Activated CD4-positive, alpha-beta T cell treated with anti-CD3 and anti-CD28 coated beads for 36 hours (primary cell): ENCODE measurements at regions of chr2 and their contacts with region 1.

Region 1: GRCh38 chr2:37231241-37232130 is at the starts of genes CEBPZ and NDUFAF7:
- DNase-seq: peak; percentile 95
- ATAC-seq: peak; percentile 96
- H3K4me3 Mint-ChIP-seq: no peak within 1 kb of the TSS
- H3K27ac Mint-ChIP-seq: no peak within 1 kb of the TSS
- H3K4me1 Mint-ChIP-seq: peaks cover 39% of the 10 kb centered on the region
- H3K27me3 Mint-ChIP-seq: no peaks in the 10 kb centered on the region
- total RNA-seq, gene CEBPZ: 81.8 to 107 TPM
- total RNA-seq, gene NDUFAF7: 20.8 to 22.9 TPM

Region 2: DNA sequence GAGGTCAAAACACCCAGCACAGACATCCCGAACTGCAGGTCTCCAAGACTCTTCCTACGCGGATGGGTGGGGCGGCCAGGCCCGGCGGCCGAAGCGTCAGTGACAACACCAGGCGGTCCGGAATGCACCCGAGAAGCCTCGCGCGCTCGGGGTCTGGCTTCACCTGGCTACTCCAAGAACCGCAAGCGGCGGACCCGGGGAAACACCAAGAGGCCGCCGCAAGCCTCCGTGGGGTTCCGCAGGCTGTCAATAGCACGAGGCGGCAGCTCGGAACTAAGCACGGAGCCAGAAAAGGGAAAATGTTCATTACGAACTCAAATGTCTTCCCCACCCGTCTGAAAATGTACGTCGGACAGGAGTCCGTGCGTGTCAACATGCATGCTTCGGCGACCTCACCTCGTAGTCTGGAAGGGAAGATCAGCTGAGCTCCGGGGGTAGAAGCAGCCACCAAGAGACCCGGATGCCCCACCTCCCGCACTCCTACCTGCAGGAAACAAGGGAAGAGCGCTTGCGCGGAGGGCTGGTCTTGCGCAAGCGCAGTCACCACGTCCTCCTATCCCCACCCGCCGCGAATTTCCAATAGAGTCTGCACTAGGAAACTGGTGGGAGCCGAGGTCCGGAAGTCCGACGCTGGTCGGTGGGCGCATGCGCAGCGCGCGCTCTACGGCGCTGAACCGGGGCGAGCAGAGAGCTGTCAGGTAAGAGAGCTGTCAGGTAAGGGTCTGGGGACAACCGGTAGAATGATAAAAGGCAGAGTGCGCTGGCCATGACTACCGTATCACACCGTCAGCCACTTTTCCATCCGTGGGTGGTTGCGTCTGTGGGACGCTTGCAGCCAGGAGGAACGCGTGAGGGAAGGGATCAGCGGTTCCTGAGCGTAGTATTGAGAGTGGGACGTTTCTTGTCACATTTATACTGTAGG is 147.4 kb before region 1 on chr2 and contains the starts of genes GPATCH11 and HEATR5B:
- CTCF ChIA-PET with region 1: no interaction called
- POLR2A ChIA-PET with region 1: interaction called, 4 read pairs
- intact Hi-C with region 1: loop called (anchors 1 kb)
- DNase-seq: peak; percentile 94
- ATAC-seq: peak; percentile 89
- H3K4me3 Mint-ChIP-seq: no peak within 1 kb of the TSS
- H3K27ac Mint-ChIP-seq: no peak within 1 kb of the TSS
- H3K4me1 Mint-ChIP-seq: peaks cover 44% of the 10 kb centered on the region
- H3K27me3 Mint-ChIP-seq: no peaks in the 10 kb centered on the region
- total RNA-seq, gene GPATCH11: 9.6 to 10.0 TPM
- total RNA-seq, gene HEATR5B: 15.2 TPM

Region 3: GRCh38 chr2:37168217-37168981 is 63.1 kb before region 1 on chr2:
- CTCF ChIA-PET with region 1: interaction called, 5 read pairs
- POLR2A ChIA-PET with region 1: no interaction called
- intact Hi-C with region 1: loop called in 1 of 2 experiments (anchors 1 kb)
- DNase-seq: peak; percentile 45
- ATAC-seq: peak; percentile 87
- H3K4me3 Mint-ChIP-seq: no peak overlapping the region
- H3K27ac Mint-ChIP-seq: no peak overlapping the region
- H3K4me1 Mint-ChIP-seq: no peaks in the 10 kb centered on the region
- H3K27me3 Mint-ChIP-seq: no peaks in the 10 kb centered on the region

Region 4: DNA sequence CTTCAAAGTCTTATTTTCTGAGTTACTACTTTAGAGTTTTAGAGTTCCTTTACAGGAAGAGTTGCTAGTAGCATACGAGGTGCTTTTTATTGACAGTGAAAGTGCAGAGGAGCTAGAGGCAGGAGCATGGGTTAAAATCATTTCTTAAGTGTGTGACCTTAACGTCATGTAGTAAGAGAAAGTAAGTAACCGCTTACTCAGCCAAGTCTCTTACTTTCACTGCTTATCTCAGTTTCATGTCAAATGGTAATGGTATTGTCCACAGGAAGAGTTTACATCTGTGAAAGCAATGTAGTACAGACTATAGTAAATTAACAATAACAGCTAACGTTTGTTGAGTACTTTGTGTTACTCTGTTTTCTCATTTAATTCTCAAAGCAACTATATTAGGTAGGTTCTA is 12.5 kb after region 1 on chr2:
- CTCF ChIA-PET with region 1: interaction called, 5 read pairs
- POLR2A ChIA-PET with region 1: interaction called, 13 read pairs
- intact Hi-C with region 1: loop called (anchors 1 to 2 kb)
- DNase-seq: no peak
- ATAC-seq: peak; percentile 98
- H3K4me3 Mint-ChIP-seq: no peak overlapping the region
- H3K27ac Mint-ChIP-seq: peak overlapping the region; percentile 82
- H3K4me1 Mint-ChIP-seq: peaks cover 26% of the 10 kb centered on the region
- H3K27me3 Mint-ChIP-seq: no peaks in the 10 kb centered on the region

Region 5: DNA sequence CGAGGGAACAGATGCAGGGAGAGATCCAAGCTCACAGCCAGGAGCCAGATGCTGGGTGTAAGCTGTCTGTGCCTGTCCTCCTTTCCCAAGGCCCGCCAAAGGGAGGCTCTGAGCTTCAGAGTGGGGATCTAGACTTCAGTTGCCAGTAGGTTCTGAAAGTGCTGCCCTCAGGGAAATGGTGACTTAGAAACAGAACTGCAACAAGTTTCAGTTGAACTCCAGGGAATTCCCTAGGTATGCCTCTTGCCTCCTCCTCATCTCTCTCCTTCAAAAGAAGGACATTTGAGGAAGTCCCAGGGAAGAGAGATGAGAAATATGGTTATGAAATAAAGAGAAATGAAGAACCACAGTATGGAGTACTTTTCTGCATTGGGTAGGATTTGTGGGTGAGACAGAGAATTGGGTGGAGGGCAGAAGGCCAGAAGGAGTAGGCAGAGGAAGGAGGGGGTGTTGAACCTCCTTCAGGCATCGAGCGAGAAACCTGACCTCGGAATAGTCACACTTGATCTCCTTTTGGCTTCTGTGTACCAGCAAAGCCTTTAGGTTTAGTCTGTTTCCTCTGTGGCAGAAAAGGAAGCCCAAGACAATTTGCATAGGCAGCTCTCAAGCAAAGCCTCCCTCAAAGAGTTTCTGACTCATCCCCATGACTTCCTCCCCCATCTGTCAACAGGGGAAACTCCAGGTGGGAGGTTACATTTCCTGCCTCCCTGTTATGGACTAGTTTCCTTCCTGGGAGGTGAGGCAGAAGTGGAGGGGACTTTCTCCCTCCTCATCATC is 158.7 kb after region 1 on chr2:
- CTCF ChIA-PET with region 1: no interaction called
- POLR2A ChIA-PET with region 1: interaction called, 8 read pairs
- intact Hi-C with region 1: loop called (anchors 1 to 2 kb)
- DNase-seq: peak; percentile 77
- ATAC-seq: peak; percentile 95
- H3K4me3 Mint-ChIP-seq: peak overlapping the region; percentile 30
- H3K27ac Mint-ChIP-seq: peak overlapping the region; percentile 75
- H3K4me1 Mint-ChIP-seq: no peaks in the 10 kb centered on the region
- H3K27me3 Mint-ChIP-seq: peaks cover 5% of the 10 kb centered on the region